ENCODE measurements at regions of chr7 and their contacts with region 1.

Region 1: DNA sequence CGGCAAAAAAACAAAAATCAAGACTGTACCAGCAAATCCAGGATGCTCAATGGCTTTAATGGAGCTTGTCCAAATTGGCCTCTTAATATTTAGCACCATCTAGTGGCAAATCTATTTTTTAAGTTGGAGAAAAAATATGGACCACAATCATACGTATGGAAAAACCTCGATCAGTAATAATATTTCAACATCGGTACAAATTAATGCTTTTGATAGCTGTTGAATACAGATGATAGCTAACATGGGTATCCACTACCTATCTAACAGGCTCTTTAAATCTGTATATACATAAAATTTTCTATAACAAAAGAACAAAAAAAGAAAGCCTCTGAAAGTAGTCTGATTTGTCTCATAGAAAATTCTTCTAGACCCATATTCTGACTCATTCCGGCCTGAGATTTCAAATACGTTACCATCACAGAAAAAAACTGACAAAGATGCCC is 29.2 kb downstream of the COA1 start:
- DNase-seq: peak; percentile 88
- H3K4me3 ChIP-seq: peak overlapping the region; percentile 54
- H3K27ac ChIP-seq: peak overlapping the region; percentile 34
- H3K4me1 ChIP-seq: peaks cover 55% of the 10 kb centered on the region
- H3K27me3 ChIP-seq: no peaks in the 10 kb centered on the region

Region 2: GRCh38 chr7:43294080-43294630 is 405.9 kb before region 1 on chr7:
- in situ Hi-C with region 1: loop called (anchors 25 kb)
- DNase-seq: peak; percentile 87
- H3K4me3 ChIP-seq: no peak overlapping the region
- H3K27ac ChIP-seq: no peak overlapping the region
- H3K4me1 ChIP-seq: peaks cover 3% of the 10 kb centered on the region; the same call in 1 of the 2 replicates
- H3K27me3 ChIP-seq: no peaks in the 10 kb centered on the region

Region 3: DNA sequence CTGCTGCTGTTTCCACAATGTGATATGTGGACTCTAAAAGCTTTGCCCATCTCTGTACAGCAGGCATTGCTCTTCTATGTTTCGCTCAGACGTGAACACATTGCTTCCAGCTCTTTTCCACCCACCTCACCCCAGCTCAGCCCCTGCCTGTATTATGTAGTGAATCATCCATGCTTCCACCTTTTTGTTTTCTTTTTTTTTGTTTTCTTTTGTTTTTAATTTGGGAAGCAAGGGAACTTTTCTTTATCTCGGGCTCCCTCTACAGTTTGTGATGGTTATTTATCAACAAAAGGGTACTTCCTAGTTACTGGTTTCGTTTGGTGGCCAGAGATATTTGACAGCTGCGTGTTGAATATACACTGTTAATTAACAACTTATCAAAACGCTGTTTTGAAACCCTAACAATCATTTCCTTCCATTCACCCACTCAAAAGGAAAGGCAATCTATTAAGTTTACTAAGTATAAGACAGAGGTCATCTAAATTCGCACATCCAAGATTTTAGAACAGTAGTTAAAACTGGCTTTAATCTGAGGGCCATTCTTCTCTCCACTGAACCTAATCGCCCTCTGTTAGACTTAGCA is 245.1 kb before region 1 on chr7:
- in situ Hi-C with region 1: loop called (anchors 25 kb)
- DNase-seq: peak; percentile 72
- H3K4me3 ChIP-seq: peak overlapping the region; percentile 31
- H3K27ac ChIP-seq: no peak overlapping the region
- H3K4me1 ChIP-seq: peaks cover 6% of the 10 kb centered on the region; the same call in 1 of the 2 replicates
- H3K27me3 ChIP-seq: no peaks in the 10 kb centered on the region

Region 4: GRCh38 chr7:43572516-43573049 is 127.5 kb before region 1 on chr7:
- in situ Hi-C with region 1: loop called (anchors 10 kb)
- DNase-seq: peak; percentile 99
- H3K4me3 ChIP-seq: peak overlapping the region; percentile 28
- H3K27ac ChIP-seq: peak overlapping the region; percentile 98
- H3K4me1 ChIP-seq: peaks cover 38% of the 10 kb centered on the region
- H3K27me3 ChIP-seq: no peaks in the 10 kb centered on the region

Measured in GM23248 (cell line).